Caco-2 (cell line): ENCODE measurements at regions of chr11 and their contacts with region 1.

Region 1: GRCh38 chr11:134270250-134270714 is 5.9 kb upstream of the GLB1L3 start:
- DNase-seq: peak in 1 of 2 experiments; percentile 62
- H3K4me3 ChIP-seq: no peak overlapping the region
- H3K4me3 Mint-ChIP-seq: no peak overlapping the region
- H3K27ac Mint-ChIP-seq: no peak overlapping the region
- H3K4me1 ChIP-seq: peaks cover 6% of the 10 kb centered on the region; the same call in 1 of the 2 replicates
- H3K4me1 Mint-ChIP-seq: peaks cover 4% of the 10 kb centered on the region
- H3K27me3 ChIP-seq: no peaks in the 10 kb centered on the region; the same call in 1 of the 2 replicates
- H3K27me3 Mint-ChIP-seq: peaks cover 8% of the 10 kb centered on the region
- CTCF ChIP-seq: peak; percentile 37 to 63

Region 2: GRCh38 chr11:134331354-134332188 is 61.3 kb after region 1 on chr11 and contains the start of gene GLB1L2:
- CTCF ChIA-PET with region 1: interaction called, 6 read pairs
- POLR2A ChIA-PET with region 1: no interaction called
- intact Hi-C with region 1: loop called (anchors 2 kb)
- DNase-seq: peak; percentile 92 to 94
- H3K4me3 ChIP-seq: peak within 1 kb of the TSS; percentile 90
- H3K4me3 Mint-ChIP-seq: peak within 1 kb of the TSS; percentile 86
- H3K27ac Mint-ChIP-seq: peak within 1 kb of the TSS; percentile 33
- H3K4me1 ChIP-seq: peaks cover 11% of the 10 kb centered on the region
- H3K4me1 Mint-ChIP-seq: peaks cover 30% of the 10 kb centered on the region
- H3K27me3 ChIP-seq: no peaks in the 10 kb centered on the region
- H3K27me3 Mint-ChIP-seq: peaks cover 27% of the 10 kb centered on the region
- CTCF ChIP-seq: no peak
- total RNA-seq, gene GLB1L2: 15.8 TPM in 2 replicates

Region 3: GRCh38 chr11:134380786-134381185 is 110.5 kb after region 1 on chr11:
- CTCF ChIA-PET with region 1: interaction called, 10 read pairs
- POLR2A ChIA-PET with region 1: no interaction called
- intact Hi-C with region 1: loop called (anchors 2 kb)
- DNase-seq: peak in 1 of 2 experiments; percentile 30
- H3K4me3 ChIP-seq: no peak overlapping the region
- H3K4me3 Mint-ChIP-seq: no peak overlapping the region
- H3K27ac Mint-ChIP-seq: no peak overlapping the region
- H3K4me1 ChIP-seq: no peaks in the 10 kb centered on the region
- H3K4me1 Mint-ChIP-seq: no peaks in the 10 kb centered on the region
- H3K27me3 ChIP-seq: no peaks in the 10 kb centered on the region; the same call in 1 of the 2 replicates
- H3K27me3 Mint-ChIP-seq: peaks cover 34% of the 10 kb centered on the region
- CTCF ChIP-seq: peak in 1 of 2 experiments; percentile 51